Activated T-helper 1 cell treated with anti-CD3 and anti-CD28 coated beads, Interleukin-12 subunit alpha, Interleukin-12 subunit beta, Interleukin-2, Interleukin-4 antibody, amounts not matched to agents 30 ng/mL and 10 ng/mL and 1 ng/mL, durations not matched to agents 14 hours and 24 hours and 36 hours (primary cell): ENCODE measurements at regions of chr9 and their contacts with region 1.

Region 1: DNA sequence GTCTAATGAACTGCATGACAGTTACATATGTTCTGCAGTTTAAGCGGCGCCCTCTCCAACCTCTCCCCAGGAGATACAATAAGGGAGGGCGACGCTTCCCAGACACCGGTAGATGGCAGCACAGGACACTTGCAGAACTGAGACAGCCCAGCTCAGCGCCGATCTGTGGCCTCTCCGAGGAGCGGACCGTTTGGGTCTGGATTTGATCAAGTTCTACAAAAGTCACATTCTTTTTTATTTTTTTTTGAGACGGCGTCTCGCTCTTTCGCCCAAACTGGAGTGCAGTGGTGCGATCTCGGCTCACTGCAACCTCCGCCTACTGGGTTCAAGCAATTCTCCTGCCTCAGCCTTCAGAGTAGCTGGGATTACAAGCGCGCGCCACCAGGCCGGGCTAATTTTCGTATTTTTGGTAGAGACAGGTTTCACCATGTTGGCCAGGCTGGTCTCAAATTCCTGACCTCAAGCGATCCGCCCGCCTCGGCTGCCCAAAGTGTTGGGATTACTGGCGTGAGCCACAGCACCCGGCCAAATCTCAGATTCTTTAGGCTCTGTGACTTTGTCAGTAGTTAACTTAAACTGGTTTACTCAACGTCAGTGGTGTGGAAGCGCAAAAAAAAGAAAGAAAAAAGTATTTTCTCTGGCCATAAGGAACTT is 1.4 kb upstream of the ATOSB start:
- DNase-seq: peak; percentile 83
- H3K4me3 Mint-ChIP-seq: peak overlapping the region; percentile 94
- H3K27ac Mint-ChIP-seq: peak overlapping the region; percentile 93
- H3K4me1 Mint-ChIP-seq: peaks cover 45% of the 10 kb centered on the region
- H3K27me3 Mint-ChIP-seq: peaks cover 4% of the 10 kb centered on the region

Region 2: GRCh38 chr9:34665381-34666250 is 451.4 kb before region 1 on chr9:
- intact Hi-C with region 1: loop called (anchors 1 kb)
- DNase-seq: peak; percentile 86
- H3K4me3 Mint-ChIP-seq: peak overlapping the region; percentile 88
- H3K27ac Mint-ChIP-seq: peak overlapping the region; percentile 84
- H3K4me1 Mint-ChIP-seq: peaks cover 31% of the 10 kb centered on the region
- H3K27me3 Mint-ChIP-seq: no peaks in the 10 kb centered on the region

Region 3: GRCh38 chr9:35079426-35080341 is 37.3 kb before region 1 on chr9 and contains the start of gene FANCG:
- intact Hi-C with region 1: loop called (anchors 1 kb)
- DNase-seq: peak; percentile 86
- H3K4me3 Mint-ChIP-seq: peak within 1 kb of the TSS; percentile 96
- H3K27ac Mint-ChIP-seq: peak within 1 kb of the TSS; percentile 98
- H3K4me1 Mint-ChIP-seq: peaks cover 32% of the 10 kb centered on the region
- H3K27me3 Mint-ChIP-seq: no peaks in the 10 kb centered on the region
- total RNA-seq, gene FANCG: 102 and 104 TPM in 2 replicates

Region 4: GRCh38 chr9:35161713-35162604 is 44.9 kb after region 1 on chr9 and contains the start of gene UNC13B:
- intact Hi-C with region 1: loop called (anchors 1 kb)
- DNase-seq: peak; percentile 60
- H3K4me3 Mint-ChIP-seq: peak within 1 kb of the TSS; percentile 90
- H3K27ac Mint-ChIP-seq: no peak within 1 kb of the TSS
- H3K4me1 Mint-ChIP-seq: peaks cover 17% of the 10 kb centered on the region
- H3K27me3 Mint-ChIP-seq: peaks cover 20% of the 10 kb centered on the region
- total RNA-seq, gene UNC13B: 0.34 and 0.41 TPM in 2 replicates

Region 5: DNA sequence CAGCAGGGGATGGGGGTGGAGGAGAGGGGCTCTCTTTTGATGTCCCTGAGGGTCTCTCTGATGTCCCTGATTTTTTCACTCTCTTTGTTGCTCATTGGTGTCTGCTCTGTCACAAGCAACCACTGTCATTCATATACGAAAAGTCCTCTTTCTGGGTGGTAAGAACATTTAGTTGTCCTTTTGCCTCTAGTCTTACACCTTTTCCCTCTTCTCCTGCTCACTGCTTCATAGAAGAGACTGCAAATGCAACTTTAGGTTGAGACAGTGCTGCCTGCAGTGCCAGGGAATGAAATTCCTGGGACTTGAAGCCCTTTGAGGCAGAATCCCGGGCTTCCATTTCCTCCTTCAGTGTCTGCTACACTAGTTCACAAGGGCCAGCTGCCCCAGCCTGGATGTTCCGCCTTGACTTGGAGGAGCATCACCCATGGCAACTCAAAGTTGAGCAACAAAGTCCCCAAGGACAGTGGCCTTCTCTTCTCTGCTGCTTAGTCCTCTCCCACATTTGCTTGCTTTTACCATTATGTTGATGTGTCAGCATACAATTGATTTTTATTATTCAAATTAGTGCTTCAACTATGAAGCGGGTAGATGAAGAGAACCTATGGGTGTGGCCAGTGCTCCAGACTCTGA is 278.2 kb after region 1 on chr9:
- intact Hi-C with region 1: loop called (anchors 10 kb)
- DNase-seq: no peak
- H3K4me3 Mint-ChIP-seq: no peak overlapping the region
- H3K27ac Mint-ChIP-seq: no peak overlapping the region
- H3K4me1 Mint-ChIP-seq: no peaks in the 10 kb centered on the region
- H3K27me3 Mint-ChIP-seq: peaks cover 3% of the 10 kb centered on the region

Region 6: GRCh38 chr9:35603987-35604577 is 487.1 kb after region 1 on chr9:
- intact Hi-C with region 1: loop called (anchors 1 kb)
- DNase-seq: peak; percentile 99
- H3K4me3 Mint-ChIP-seq: peak overlapping the region; percentile 91
- H3K27ac Mint-ChIP-seq: peak overlapping the region; percentile 99
- H3K4me1 Mint-ChIP-seq: peaks cover 34% of the 10 kb centered on the region
- H3K27me3 Mint-ChIP-seq: peaks cover 2% of the 10 kb centered on the region

Region 7: DNA sequence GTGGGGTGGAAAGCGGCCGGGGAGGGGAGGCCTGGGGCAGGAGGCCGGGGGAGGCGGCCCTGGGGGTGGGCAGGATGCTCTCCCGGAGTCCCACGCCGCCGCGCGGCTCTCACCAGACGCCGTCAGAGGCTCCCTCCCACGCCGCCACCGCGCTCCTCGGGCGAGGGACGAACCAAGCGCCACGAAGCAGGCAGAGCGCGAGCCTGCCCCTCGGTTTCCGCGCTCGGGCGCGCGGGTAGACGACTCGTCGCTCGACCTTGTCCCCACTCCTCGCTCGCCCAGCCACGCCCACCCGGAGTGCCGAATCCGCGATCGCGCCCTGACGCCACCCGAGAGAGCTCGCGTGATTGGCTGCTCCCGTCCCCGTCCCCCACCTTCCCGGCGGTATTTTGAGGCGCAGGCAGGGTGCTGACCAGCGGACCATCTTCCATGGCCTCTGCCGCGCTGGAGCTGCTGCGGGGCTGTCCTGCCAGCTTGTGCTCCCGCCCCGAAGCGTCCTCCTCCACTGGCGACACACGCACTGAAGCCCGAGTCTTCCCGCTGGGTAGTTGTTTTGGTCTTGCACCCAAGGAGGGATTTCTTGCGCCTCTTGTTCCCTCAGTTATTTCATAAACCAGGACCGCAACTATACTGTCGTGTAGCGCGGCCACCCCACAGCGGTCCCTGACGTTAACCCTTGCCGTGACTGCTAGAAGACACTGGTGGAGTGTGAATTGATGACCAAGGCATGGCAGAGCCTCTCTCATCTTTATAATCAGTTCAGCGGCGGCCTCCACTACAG is 1141.4 kb after region 1 on chr9 and contains the start of gene GNE:
- intact Hi-C with region 1: loop called (anchors 10 kb)
- DNase-seq: peak; percentile 98
- H3K4me3 Mint-ChIP-seq: peak within 1 kb of the TSS; percentile 96
- H3K27ac Mint-ChIP-seq: peak within 1 kb of the TSS; percentile 96
- H3K4me1 Mint-ChIP-seq: peaks cover 15% of the 10 kb centered on the region
- H3K27me3 Mint-ChIP-seq: no peaks in the 10 kb centered on the region
- total RNA-seq, gene GNE: 21.7 and 22.7 TPM in 2 replicates